Caco-2 (cell line): ENCODE measurements at regions of chr22 and their contacts with region 1.

Region 1: DNA sequence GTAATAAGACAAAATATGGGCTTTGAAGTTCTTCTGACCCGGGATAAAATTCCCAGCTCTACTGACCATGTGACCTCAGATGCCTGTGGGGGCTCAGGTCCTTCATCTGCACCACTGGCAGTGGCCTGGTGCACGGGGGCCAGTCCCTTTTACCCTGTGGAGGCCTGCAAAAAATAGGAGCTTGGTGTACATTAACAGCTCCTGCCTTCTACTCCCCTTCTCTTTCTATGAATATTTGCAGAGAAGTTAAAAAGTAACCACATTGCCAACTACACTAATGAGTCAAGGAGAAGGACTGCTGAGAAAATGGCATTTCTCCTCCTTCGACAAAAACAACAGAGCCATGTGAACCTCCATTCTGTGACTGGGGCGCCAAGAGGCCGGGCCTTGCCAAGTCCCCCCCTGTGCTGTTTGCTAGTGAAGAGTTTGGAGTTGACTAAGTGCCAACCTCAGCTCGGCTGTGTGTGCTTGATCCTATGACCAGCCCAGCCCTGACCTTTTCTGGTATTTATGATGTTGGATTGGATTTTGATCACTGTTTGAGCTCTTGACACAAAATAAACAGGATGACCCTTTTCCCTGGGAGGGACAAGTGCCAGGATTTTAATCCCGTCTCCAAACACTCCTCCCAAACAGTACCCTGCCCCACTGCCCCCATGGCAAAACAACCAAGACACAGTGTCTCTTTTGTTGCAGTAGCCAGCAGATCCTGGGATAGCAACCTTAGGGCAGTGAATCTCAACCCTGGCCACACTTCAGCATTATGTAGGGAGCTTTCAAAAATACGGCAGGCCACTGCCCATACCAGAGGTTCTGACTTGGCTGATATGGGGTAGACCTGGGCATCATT is 380.1 kb downstream of the LARGE1 start:
- DNase-seq: peak; percentile 76 to 88
- H3K4me3 ChIP-seq: no peak overlapping the region
- H3K4me3 Mint-ChIP-seq: peak overlapping the region; percentile 64
- H3K27ac Mint-ChIP-seq: peak overlapping the region; percentile 92
- H3K4me1 ChIP-seq: peaks cover 56% of the 10 kb centered on the region
- H3K4me1 Mint-ChIP-seq: peaks cover 28% of the 10 kb centered on the region
- H3K27me3 ChIP-seq: no peaks in the 10 kb centered on the region
- H3K27me3 Mint-ChIP-seq: no peaks in the 10 kb centered on the region
- CTCF ChIP-seq: no peak

Region 2: DNA sequence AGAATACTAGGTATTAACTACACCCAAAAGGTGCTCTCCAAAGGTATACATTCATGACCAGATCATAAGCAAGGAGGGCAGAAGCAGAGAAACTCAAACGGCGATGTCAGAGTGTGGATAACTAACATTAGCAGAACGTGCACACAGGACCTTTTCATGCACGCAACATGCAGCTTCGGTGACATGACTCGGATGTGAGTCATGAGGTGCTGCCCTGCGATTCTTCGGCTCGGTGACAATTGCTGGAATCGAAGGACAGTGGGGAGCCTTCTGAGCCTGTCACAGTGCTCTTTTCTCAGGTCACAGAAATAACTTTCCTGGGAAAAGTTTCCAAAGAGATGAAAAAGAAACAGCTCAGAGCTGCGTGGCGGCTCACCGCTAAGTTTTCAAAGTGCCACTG is 63.4 kb before region 1 on chr22:
- CTCF ChIA-PET with region 1: no interaction called
- POLR2A ChIA-PET with region 1: no interaction called
- intact Hi-C with region 1: loop called (anchors 1 kb)
- DNase-seq: no peak
- H3K4me3 ChIP-seq: no peak overlapping the region
- H3K4me3 Mint-ChIP-seq: peak overlapping the region; percentile 54
- H3K27ac Mint-ChIP-seq: peak overlapping the region; percentile 83
- H3K4me1 ChIP-seq: peaks cover 20% of the 10 kb centered on the region
- H3K4me1 Mint-ChIP-seq: peaks cover 12% of the 10 kb centered on the region
- H3K27me3 ChIP-seq: no peaks in the 10 kb centered on the region
- H3K27me3 Mint-ChIP-seq: no peaks in the 10 kb centered on the region
- CTCF ChIP-seq: no peak

Region 3: DNA sequence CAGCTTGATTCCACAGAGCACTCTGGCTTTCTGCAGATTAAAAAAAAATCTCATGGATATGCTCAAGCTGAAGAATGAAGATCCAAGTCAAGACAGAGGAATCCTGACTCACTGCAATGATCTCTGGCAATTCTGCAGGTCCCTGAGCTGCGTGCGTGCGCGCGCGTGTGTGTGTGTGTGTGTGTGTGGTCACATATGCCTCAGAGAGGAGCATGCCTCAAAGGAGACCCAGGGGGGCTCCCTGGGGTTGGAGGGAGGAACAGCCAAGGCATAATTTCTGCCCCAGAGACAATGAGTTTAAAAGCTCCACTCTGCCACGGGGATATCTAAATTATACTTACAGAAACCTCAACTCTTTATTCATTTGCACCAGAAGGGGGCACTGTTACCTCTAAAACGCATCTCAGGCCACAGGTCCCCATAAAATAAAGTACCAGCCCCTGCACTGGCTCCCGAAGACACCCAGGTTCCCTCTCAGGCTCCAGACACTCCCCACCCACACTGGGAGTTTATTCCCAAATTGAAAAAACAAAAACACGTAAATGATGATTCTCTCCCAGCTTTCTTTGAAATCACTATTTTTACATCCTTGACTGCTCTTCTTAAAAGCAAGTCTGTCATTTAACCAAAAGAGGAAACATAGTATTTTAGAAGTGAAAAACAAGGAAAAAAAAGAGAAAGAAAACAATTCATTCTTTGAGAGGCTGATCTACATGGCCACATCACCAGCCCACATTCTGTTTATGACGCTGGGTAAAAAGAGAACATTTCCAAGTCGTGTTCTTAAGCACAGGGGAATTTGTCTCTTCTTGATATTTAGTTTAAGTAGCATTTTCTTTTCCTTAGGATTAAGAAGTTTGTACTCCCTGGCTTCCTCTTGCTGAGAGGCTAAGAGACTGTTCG is 20.8 kb before region 1 on chr22:
- CTCF ChIA-PET with region 1: interaction called, 13 read pairs
- POLR2A ChIA-PET with region 1: interaction called, 3 read pairs
- intact Hi-C with region 1: no loop called
- DNase-seq: peak; percentile 42 to 68
- H3K4me3 ChIP-seq: no peak overlapping the region
- H3K4me3 Mint-ChIP-seq: no peak overlapping the region
- H3K27ac Mint-ChIP-seq: no peak overlapping the region
- H3K4me1 ChIP-seq: peaks cover 8% of the 10 kb centered on the region; the same call in 1 of the 2 replicates
- H3K4me1 Mint-ChIP-seq: peaks cover 2% of the 10 kb centered on the region
- H3K27me3 ChIP-seq: no peaks in the 10 kb centered on the region
- H3K27me3 Mint-ChIP-seq: no peaks in the 10 kb centered on the region
- CTCF ChIP-seq: peak; percentile 64 to 76

Region 4: DNA sequence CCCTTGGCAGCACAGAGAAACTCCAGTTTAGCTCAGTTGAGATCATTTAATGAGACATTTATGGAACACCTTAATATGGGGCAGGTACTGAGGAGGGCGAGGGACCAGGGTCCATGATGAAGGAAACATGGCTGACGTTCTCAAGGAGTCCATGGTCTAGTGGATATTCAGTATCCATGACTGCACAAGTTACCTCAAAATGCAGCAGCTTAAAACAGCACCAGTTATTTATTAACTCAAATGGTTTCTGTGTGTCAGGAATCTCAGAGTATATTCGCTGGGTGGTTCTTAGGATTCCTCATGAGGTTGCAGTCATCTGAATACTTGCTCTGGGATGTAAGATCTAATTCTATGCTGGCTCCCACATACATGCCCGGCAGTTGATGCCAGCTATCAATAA is 33.4 kb after region 1 on chr22:
- CTCF ChIA-PET with region 1: interaction called, 4 read pairs
- POLR2A ChIA-PET with region 1: no interaction called
- intact Hi-C with region 1: loop called (anchors 1 kb)
- DNase-seq: peak in 1 of 2 experiments; percentile 5
- H3K4me3 ChIP-seq: no peak overlapping the region; the same call in 1 of the 2 replicates
- H3K4me3 Mint-ChIP-seq: no peak overlapping the region
- H3K27ac Mint-ChIP-seq: no peak overlapping the region
- H3K4me1 ChIP-seq: peaks cover 19% of the 10 kb centered on the region
- H3K4me1 Mint-ChIP-seq: peaks cover 19% of the 10 kb centered on the region
- H3K27me3 ChIP-seq: no peaks in the 10 kb centered on the region
- H3K27me3 Mint-ChIP-seq: no peaks in the 10 kb centered on the region
- CTCF ChIP-seq: no peak

Region 5: DNA sequence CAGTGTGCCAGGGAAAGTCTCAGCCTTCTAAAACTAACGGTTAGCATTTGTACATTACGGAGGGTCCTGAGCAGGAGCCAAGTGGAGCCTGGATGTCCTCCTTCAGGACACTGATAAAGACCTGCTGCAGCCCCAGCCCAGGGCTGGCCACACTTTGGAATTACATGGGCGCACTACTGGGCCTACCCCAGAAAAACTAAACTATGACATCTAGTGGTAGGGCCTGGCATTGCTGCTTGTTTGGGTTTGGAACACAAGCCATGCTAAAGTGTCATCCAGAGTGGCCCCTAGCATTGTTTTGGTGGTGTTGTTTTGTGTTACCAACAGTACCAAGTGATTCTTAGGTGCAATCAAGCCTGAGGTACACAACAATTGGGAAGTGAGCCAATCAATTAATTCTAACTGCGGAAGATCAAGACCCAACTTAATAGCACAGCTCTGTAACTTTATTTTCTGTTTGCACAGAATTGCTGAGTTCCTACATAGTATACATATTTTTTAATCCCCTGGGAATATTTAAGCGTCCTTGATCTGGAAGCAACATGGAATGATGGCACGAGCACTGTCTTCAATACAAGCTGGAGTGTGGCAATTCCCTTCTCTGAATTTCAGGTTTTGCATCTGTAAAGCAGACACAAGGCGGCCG is 39.4 kb after region 1 on chr22:
- CTCF ChIA-PET with region 1: interaction called, 4 read pairs
- POLR2A ChIA-PET with region 1: no interaction called
- intact Hi-C with region 1: loop called (anchors 1 kb)
- DNase-seq: peak; percentile 77 to 85
- H3K4me3 ChIP-seq: no peak overlapping the region
- H3K4me3 Mint-ChIP-seq: no peak overlapping the region
- H3K27ac Mint-ChIP-seq: peak overlapping the region; percentile 70
- H3K4me1 ChIP-seq: peaks cover 20% of the 10 kb centered on the region
- H3K4me1 Mint-ChIP-seq: peaks cover 23% of the 10 kb centered on the region
- H3K27me3 ChIP-seq: no peaks in the 10 kb centered on the region
- H3K27me3 Mint-ChIP-seq: no peaks in the 10 kb centered on the region
- CTCF ChIP-seq: peak; percentile 92